H1 (cell line): ENCODE measurements at regions of chr6 and their contacts with region 1.

Region 1: GRCh38 chr6:47787620-47788497 is 6.0 kb downstream of the OPN5 start:
- DNase-seq: peak in 1 of 2 experiments; percentile 74
- H3K4me3 ChIP-seq: no peak overlapping the region
- H3K27ac ChIP-seq: no peak overlapping the region
- H3K4me1 ChIP-seq: peaks cover 0 to 7% (median 4%) of the 10 kb centered on the region in 4 experiments; a peak in 4 of 7 replicates
- H3K27me3 ChIP-seq: peaks cover 5 to 31% (median 27%) of the 10 kb centered on the region in 4 experiments; a peak in 6 of 7 replicates
- CTCF ChIP-seq: peak; percentile 89 to 96 (median 90)
- EP300 ChIP-seq: no peak
- POLR2A ChIP-seq: no peak
- RAD21 ChIP-seq: peak; percentile 98 to 99

Region 2: GRCh38 chr6:47769982-47770381 is 17.9 kb before region 1 on chr6:
- CTCF ChIA-PET with region 1: no interaction called
- POLR2A ChIA-PET with region 1: no interaction called
- DNase-seq: no peak
- H3K4me3 ChIP-seq: no peak overlapping the region
- H3K27ac ChIP-seq: no peak overlapping the region
- H3K4me1 ChIP-seq: no peaks in the 10 kb centered on the region
- H3K27me3 ChIP-seq: peaks cover 0 to 1% (median 0%) of the 10 kb centered on the region in 4 experiments; a peak in 1 of 7 replicates
- CTCF ChIP-seq: no peak
- EP300 ChIP-seq: no peak
- POLR2A ChIP-seq: no peak
- RAD21 ChIP-seq: no peak

Region 3: GRCh38 chr6:47804821-47805220 is 17.0 kb after region 1 on chr6:
- CTCF ChIA-PET with region 1: interaction called, 27 read pairs
- POLR2A ChIA-PET with region 1: no interaction called
- DNase-seq: no peak
- H3K4me3 ChIP-seq: no peak overlapping the region
- H3K27ac ChIP-seq: no peak overlapping the region
- H3K4me1 ChIP-seq: no peaks in the 10 kb centered on the region
- H3K27me3 ChIP-seq: peaks cover 0 to 1% (median 0%) of the 10 kb centered on the region in 4 experiments; a peak in 1 of 7 replicates
- CTCF ChIP-seq: no peak
- EP300 ChIP-seq: no peak
- POLR2A ChIP-seq: no peak
- RAD21 ChIP-seq: no peak

Region 4: GRCh38 chr6:48476257-48476656 is 688.4 kb after region 1 on chr6:
- CTCF ChIA-PET with region 1: interaction called, 25 read pairs
- POLR2A ChIA-PET with region 1: no interaction called
- DNase-seq: peak in 1 of 2 experiments; percentile 5
- H3K4me3 ChIP-seq: no peak overlapping the region
- H3K27ac ChIP-seq: no peak overlapping the region
- H3K4me1 ChIP-seq: no peaks in the 10 kb centered on the region
- H3K27me3 ChIP-seq: no peaks in the 10 kb centered on the region
- CTCF ChIP-seq: peak in 2 of 3 experiments; percentile 61 to 73; a peak in 3 of 4 replicates
- EP300 ChIP-seq: no peak
- POLR2A ChIP-seq: no peak
- RAD21 ChIP-seq: peak; percentile 88 to 91

Region 5: DNA sequence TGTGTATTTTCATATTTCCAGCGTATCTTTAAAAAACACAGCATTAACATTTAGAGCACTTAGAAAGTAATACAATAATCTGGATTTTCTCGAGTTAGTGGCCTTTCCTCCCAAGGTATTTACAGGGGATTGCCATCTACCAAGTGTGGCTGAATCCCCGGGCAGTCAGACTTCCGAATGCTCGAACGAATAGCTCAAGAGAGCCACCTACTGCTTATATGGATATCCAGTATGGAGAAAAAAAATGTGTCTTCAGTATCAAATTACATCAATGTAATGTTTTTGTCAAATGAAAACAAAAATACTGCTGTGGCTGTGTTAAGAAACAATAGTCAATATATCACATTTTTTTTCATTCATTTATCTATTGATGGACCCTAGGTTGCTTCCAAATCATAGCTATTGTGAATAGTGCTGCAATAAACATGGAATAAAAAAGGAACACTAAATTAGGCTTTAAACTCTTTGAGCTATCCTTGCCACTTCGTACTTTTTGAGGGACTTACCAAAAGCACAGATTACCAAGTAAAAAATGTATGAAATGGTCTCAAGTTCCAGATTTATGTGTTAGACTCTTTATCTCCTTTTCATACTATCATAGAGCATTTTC is 977.6 kb after region 1 on chr6:
- CTCF ChIA-PET with region 1: interaction called, 12 read pairs
- POLR2A ChIA-PET with region 1: no interaction called
- DNase-seq: peak in 1 of 2 experiments; percentile 25
- H3K4me3 ChIP-seq: peak overlapping the region in 1 of 4 experiments; percentile 37; a peak in 1 of 8 replicates
- H3K27ac ChIP-seq: no peak overlapping the region
- H3K4me1 ChIP-seq: peaks cover 0 to 8% (median 2%) of the 10 kb centered on the region in 4 experiments; a peak in 3 of 7 replicates
- H3K27me3 ChIP-seq: no peaks in the 10 kb centered on the region
- CTCF ChIP-seq: peak in 2 of 3 experiments; percentile 52 to 62; a peak in 2 of 4 replicates
- EP300 ChIP-seq: no peak
- POLR2A ChIP-seq: no peak
- RAD21 ChIP-seq: peak; percentile 84 to 85